Heart right ventricle (tissue), 16 donors: ENCODE measurements at regions of chr16 and their contacts with region 1.

Region 1: GRCh38 chr16:89657442-89658220 is at the starts of genes CHMP1A and SPATA33:
- DNase-seq: peak; percentile 90 to 93
- ATAC-seq: peak; percentile 95 to 98 (median 97)
- H3K4me3 ChIP-seq: peak within 1 kb of the TSS; percentile 84 to 100 (median 98)
- H3K27ac ChIP-seq: peak within 1 kb of the TSS; percentile 43 to 98 (median 90)
- H3K4me1 ChIP-seq: peaks cover 9 to 31% (median 20%) of the 10 kb centered on the region in 9 donors
- H3K27me3 ChIP-seq: no peaks in the 10 kb centered on the region
- CTCF ChIP-seq: no peak
- total RNA-seq, gene CHMP1A: 31.5 to 47.4 (median 36.7) TPM
- total RNA-seq, gene SPATA33: 0.76 to 4.6 (median 2.4) TPM

Region 2: DNA sequence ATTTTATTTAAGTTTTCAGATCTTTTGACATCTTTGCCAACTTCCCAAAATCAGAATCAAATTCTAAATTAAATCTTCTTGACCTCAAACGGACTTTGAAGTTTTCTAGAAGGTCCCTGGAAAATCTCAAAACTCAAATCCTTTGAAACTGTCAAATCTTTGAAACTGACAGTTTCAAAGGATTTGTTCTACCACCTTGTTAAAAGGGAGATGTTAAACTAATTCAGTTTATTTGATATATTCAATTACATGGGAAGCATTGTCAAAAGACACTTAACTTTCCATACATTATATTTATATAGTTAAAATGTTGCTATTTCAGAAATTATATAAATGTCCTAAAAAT is 47.5 kb before region 1 on chr16:
- intact Hi-C with region 1: loop called in 1 of 10 experiments (anchors 1 kb)
- DNase-seq: no peak
- ATAC-seq: no peak
- H3K4me3 ChIP-seq: no peak overlapping the region
- H3K27ac ChIP-seq: no peak overlapping the region
- H3K4me1 ChIP-seq: no peaks in the 10 kb centered on the region
- H3K27me3 ChIP-seq: peaks cover 8 to 39% (median 20%) of the 10 kb centered on the region in 7 donors
- CTCF ChIP-seq: no peak

Region 3: GRCh38 chr16:89686520-89687091 is 29.0 kb after region 1 on chr16 and contains the start of gene CDK10:
- intact Hi-C with region 1: no loop called
- DNase-seq: peak; percentile 91 to 93
- ATAC-seq: peak; percentile 94 to 97 (median 96)
- H3K4me3 ChIP-seq: peak within 1 kb of the TSS; percentile 63 to 96 (median 82)
- H3K27ac ChIP-seq: peak within 1 kb of the TSS; percentile 69 to 95 (median 90)
- H3K4me1 ChIP-seq: peaks cover 4 to 14% (median 9%) of the 10 kb centered on the region in 9 donors
- H3K27me3 ChIP-seq: no peaks in the 10 kb centered on the region
- CTCF ChIP-seq: no peak
- total RNA-seq, gene CDK10: 14.7 to 31.4 (median 21.6) TPM

Region 4: DNA sequence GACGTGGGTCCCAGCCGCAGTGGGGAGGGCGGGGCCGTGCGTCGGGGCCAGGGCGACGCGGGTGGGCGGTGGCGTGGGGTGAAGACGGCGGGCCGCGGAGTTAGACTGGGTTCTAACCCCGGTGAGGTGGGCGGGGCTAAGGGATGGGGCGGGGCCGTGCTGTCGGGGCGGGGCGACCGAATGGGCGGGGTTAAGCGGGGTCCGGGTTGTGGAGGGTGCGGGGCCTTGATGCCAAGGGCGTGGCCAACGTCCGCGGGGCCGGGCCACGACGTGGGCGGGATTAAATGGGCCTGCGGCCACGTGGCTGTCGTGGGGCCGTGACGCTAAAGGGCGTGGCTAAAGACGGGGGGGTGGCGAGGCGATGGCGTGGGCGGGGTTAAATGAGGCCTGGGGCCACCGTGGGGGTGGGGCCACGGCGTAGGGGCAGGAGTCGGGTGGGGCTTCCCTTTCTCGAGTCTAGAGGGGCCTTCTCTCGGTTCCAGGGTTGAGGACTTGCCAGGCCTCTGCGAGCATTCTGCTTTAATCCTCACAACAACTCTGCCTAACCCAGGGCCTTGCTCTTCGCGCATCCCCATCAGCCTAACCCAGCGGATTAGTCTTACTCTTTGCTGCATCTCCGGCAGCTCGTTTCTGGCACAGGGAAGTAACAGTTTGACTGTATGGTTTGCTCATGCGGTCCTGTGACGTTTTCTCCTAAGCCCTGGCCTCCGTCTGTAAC is 216.5 kb after region 1 on chr16:
- intact Hi-C with region 1: loop called in 1 of 10 experiments (anchors 10 kb)
- DNase-seq: peak; percentile 95 to 97
- ATAC-seq: peak; percentile 92 to 95 (median 94)
- H3K4me3 ChIP-seq: peak overlapping the region; percentile 61 to 90 (median 83)
- H3K27ac ChIP-seq: peak overlapping the region; percentile 98 to 100 (median 99)
- H3K4me1 ChIP-seq: peaks cover 3 to 29% (median 18%) of the 10 kb centered on the region in 9 donors
- H3K27me3 ChIP-seq: no peaks in the 10 kb centered on the region
- CTCF ChIP-seq: no peak